ENCODE measurements at regions of chr2 and their contacts with region 1.

Region 1: GRCh38 chr2:224650815-224651439 is 65.2 kb downstream of the CCDC195 start:
- DNase-seq: peak in 1 of 2 donors; percentile 10
- ATAC-seq: peak in 6 of 8 donors; percentile 50 to 70 (median 60)
- H3K4me3 ChIP-seq: no peak overlapping the region
- H3K27ac ChIP-seq: no peak overlapping the region
- H3K4me1 ChIP-seq: no peaks in the 10 kb centered on the region
- H3K27me3 ChIP-seq: peaks cover 0 to 5% (median 0%) of the 10 kb centered on the region in 7 donors
- CTCF ChIP-seq: peak; percentile 52 to 88 (median 81)

Region 2: DNA sequence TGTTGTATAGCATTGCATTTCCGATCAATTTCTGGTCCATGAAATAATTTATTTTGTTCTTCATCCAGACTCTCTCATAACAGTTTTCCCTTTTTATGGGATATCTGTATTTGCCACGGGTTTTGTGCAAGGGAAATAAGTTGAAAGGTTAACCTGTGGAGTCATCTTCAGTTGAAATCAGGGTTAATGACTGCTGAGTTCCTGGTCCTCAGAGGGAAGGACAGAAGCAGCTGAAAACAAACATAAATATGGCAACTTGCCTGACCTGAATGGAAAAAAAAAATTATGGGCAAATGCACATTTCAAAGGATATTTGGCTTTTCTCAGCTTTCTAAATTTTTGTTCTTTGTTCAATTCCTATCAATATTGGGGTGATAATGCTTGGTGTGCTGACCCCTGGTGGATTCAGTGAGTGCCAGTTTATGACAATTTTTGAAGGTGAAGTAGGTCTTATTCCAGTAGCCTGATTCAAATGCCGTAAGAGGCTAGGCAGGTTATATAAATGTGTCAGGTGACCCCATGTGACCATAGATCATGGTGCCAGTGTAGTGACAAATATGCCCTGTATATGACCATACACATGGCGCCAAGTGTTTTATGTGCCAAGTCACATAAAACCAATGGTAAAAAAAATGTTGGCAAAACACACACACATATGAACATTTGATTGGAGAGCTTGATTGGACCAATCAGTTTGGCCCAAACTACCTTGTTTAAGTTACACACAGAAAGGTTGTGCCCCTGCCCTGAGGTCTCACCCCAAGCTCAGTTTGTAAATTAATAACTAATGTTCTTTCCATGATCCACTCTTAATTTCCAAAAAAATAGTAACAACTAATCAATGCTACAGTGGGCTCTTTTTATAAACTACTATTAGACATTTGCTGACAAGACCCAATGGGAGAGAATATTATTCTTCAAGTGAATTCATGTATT is 201.4 kb before region 1 on chr2:
- intact Hi-C with region 1: loop called in 6 of 10 experiments (anchors 5 to 10 kb)
- DNase-seq: no peak
- ATAC-seq: no peak
- H3K4me3 ChIP-seq: no peak overlapping the region
- H3K27ac ChIP-seq: no peak overlapping the region
- H3K4me1 ChIP-seq: no peaks in the 10 kb centered on the region
- H3K27me3 ChIP-seq: no peaks in the 10 kb centered on the region
- CTCF ChIP-seq: peak; percentile 20 to 76 (median 60)

Region 3: DNA sequence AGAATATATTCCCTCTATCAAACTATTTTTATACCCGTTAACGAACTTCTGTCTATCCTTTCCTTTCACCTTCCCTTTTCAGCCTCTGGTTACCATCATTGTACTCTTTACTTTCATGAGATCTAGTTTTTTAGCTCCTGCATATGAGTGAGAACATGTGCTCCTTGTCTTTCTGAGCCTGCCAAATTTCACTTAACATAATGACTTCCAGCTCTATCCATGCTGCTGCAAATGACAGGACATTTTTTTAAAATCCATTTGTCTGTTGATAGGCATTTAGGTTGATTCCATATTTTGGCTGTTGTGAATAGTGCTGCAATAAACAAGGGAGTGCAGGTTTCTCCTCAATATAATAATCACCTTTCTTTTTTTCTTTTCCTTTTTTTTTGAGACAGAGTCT is 73.4 kb after region 1 on chr2:
- intact Hi-C with region 1: no loop called
- DNase-seq: no peak
- ATAC-seq: peak in 1 of 8 donors; percentile 46
- H3K4me3 ChIP-seq: no peak overlapping the region
- H3K27ac ChIP-seq: no peak overlapping the region
- H3K4me1 ChIP-seq: peaks cover 0 to 7% (median 0%) of the 10 kb centered on the region in 9 donors
- H3K27me3 ChIP-seq: no peaks in the 10 kb centered on the region
- CTCF ChIP-seq: no peak